ENCODE measurements at regions of chr11 and their contacts with region 1.

Region 1: DNA sequence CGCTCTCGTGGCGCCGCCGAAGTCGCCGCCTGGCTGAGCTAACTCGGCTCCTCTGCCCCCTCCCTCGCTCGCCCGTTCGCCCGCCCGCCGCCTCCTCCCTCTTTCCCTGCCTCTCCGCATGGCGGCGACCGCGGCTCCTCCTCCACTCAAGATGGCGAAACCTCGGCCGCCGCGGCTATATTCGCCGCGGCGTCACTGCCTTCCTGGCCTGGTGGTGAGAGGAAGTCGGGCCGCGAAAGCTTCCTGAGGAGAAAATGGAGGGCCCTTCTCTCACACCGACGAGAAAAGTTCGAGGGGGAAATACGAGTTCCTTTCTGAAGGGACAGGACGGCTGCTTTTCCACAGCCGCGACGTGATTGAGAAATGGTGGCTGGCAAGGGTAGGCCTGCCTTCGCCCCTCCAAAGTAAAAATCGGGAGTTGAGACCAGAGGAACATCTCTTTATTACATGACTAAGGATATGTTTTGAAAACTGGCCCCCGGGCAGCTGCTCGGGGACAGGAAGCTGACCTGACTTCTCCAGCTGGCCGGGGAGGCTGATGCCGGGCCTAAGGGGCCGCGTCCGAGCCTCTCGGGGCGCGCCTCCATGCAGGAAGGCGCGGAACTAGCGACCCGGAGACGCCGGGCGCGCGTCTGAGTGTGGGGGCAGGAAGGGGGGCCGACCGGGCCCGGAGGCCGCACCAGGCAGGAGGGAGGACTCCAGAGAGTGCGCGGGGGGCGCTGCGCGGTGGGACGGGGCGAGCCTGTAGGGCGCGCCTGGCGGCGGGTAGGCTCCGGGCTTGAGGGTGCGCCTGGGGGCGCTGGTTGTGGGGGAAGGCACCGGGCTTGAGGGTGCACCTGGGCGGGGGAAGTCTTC is at the start of gene DDX6:
- DNase-seq: peak; percentile 83 to 95 (median 90)
- ATAC-seq: peak; percentile 65 to 71
- H3K4me3 Mint-ChIP-seq: peak within 1 kb of the TSS; percentile 98 to 100 (median 100)
- H3K27ac Mint-ChIP-seq: peak within 1 kb of the TSS; percentile 96 to 100 (median 100)
- H3K4me1 Mint-ChIP-seq: peaks cover 15 to 50% (median 25%) of the 10 kb centered on the region in 4 donors
- H3K27me3 Mint-ChIP-seq: no peaks in the 10 kb centered on the region
- polyA plus RNA-seq, gene DDX6: 82.7 to 107 (median 106) TPM

Region 2: GRCh38 chr11:118547132-118547531 is 244.2 kb before region 1 on chr11:
- POLR2A ChIA-PET with region 1: no interaction called
- DNase-seq: no peak
- ATAC-seq: no peak
- H3K4me3 Mint-ChIP-seq: no peak overlapping the region
- H3K27ac Mint-ChIP-seq: peak overlapping the region in 3 of 10 donors; percentile 44 to 66 (median 47)
- H3K4me1 Mint-ChIP-seq: no peaks in the 10 kb centered on the region
- H3K27me3 Mint-ChIP-seq: no peaks in the 10 kb centered on the region

Region 3: DNA sequence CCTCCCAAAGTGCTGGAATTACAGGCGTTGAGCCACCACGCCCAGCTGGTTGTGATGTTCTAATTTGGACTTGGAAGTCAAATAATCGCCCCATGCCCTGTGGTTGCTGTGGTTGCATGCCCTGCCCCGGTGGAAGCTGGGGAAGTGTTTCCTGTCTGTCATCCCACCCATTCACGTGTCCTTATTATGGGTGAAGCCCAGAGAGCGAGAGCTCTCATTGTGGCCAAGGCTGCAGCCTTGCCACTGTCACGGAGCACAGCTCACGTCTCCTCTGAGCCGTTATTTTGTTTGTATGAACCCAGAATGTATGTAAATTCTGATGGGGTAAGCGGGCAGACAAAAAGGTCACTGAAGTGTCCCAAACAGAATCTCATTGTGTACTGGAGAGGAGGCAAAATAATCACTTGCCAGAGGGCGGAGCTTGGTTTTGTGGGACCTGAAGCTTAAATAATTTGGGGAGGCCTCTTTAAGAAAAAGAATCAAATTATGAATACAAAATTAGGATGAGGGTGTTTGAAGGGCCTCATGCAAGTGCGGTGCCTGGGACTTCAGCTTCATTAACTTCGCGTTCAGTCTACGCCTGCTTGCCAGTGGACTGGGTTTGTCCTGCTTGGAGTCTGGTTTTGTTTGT is 86.1 kb before region 1 on chr11:
- POLR2A ChIA-PET with region 1: interaction called, 277 read pairs
- DNase-seq: peak in 9 of 10 donors; percentile 31 to 80 (median 59)
- ATAC-seq: peak; percentile 78 to 87
- H3K4me3 Mint-ChIP-seq: peak overlapping the region; percentile 60 to 89 (median 78)
- H3K27ac Mint-ChIP-seq: peak overlapping the region; percentile 90 to 99 (median 96)
- H3K4me1 Mint-ChIP-seq: peaks cover 22 to 55% (median 46%) of the 10 kb centered on the region in 4 donors
- H3K27me3 Mint-ChIP-seq: no peaks in the 10 kb centered on the region

Region 4: GRCh38 chr11:118771547-118772288 is 19.6 kb before region 1 on chr11:
- POLR2A ChIA-PET with region 1: interaction called, 13 read pairs
- DNase-seq: no peak
- ATAC-seq: no peak
- H3K4me3 Mint-ChIP-seq: peak overlapping the region; percentile 16 to 86 (median 72)
- H3K27ac Mint-ChIP-seq: peak overlapping the region; percentile 7 to 95 (median 82)
- H3K4me1 Mint-ChIP-seq: peaks cover 22 to 92% (median 85%) of the 10 kb centered on the region in 4 donors
- H3K27me3 Mint-ChIP-seq: no peaks in the 10 kb centered on the region

Region 5: DNA sequence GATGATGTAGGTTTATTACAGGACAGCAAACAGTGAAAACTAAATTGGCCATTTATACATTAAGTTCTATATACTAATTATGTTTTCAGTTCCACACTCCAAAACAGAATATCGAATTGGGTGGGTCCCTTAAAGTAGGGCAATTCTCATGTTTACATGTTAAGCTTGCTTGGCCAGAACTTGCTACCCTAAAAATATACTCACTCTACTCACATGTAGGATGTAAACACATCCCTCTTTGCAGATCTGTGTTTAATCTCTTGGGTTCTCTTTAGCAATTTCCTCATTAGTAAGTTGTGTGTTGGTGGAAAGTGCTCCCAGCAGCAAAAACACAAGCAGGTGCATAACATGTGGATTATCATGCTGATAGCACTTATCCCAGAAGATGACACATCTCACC is 22.2 kb after region 1 on chr11:
- POLR2A ChIA-PET with region 1: interaction called, 25 read pairs
- DNase-seq: no peak
- ATAC-seq: no peak
- H3K4me3 Mint-ChIP-seq: no peak overlapping the region
- H3K27ac Mint-ChIP-seq: peak overlapping the region in 2 of 10 donors; percentile 17 to 65
- H3K4me1 Mint-ChIP-seq: peaks cover 2 to 36% (median 14%) of the 10 kb centered on the region in 4 donors
- H3K27me3 Mint-ChIP-seq: no peaks in the 10 kb centered on the region

Region 6: DNA sequence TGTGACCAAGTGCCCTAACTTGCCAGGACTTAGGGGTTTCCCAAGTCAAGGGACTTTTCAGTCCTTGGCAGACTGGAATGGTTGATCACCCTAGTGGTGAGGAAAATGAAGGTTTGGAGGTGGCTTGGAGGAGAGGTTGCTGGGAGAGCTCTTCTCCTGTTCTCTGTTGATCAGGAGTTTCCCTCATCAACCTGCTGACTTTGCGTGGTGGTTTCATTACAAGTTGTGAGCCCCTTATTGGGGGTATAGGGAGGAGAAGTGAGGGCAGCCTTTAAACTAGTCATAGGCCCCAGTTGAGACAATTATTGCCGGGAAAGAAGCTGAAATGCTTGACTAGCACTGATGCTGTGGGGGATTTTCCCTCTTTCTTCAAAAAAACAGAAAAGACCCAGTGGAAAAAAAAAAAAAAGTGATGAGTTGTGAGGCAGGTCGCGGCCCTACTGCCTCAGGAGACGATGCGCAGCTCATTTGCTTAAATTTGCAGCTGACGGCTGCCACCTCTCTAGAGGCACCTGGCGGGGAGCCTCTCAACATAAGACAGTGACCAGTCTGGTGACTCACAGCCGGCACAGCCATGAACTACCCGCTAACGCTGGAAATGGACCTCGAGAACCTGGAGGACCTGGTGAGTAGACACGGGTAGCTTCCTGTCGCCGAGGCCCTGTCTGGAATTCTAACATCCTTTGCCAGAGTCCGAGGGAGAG is 92.2 kb after region 1 on chr11 and contains the start of gene CXCR5:
- POLR2A ChIA-PET with region 1: interaction called, 503 read pairs
- DNase-seq: peak in 2 of 10 donors; percentile 38 to 60
- ATAC-seq: peak; percentile 40 to 62
- H3K4me3 Mint-ChIP-seq: peak within 1 kb of the TSS in 4 of 10 donors; percentile 22 to 88 (median 44)
- H3K27ac Mint-ChIP-seq: peak within 1 kb of the TSS; percentile 22 to 84 (median 72)
- H3K4me1 Mint-ChIP-seq: peaks cover 37 to 81% (median 79%) of the 10 kb centered on the region in 4 donors
- H3K27me3 Mint-ChIP-seq: no peaks in the 10 kb centered on the region
- polyA plus RNA-seq, gene CXCR5: 0.17 to 0.63 (median 0.29) TPM